ENCODE measurements at regions of chr21 and their contacts with region 1.

Region 1: GRCh38 chr21:22280851-22281250 is 1282.6 kb downstream of the NCAM2 start:
- DNase-seq: no peak
- ATAC-seq: no peak
- H3K4me3 ChIP-seq: no peak overlapping the region
- H3K27ac ChIP-seq: no peak overlapping the region
- H3K4me1 ChIP-seq: no peaks in the 10 kb centered on the region
- H3K27me3 ChIP-seq: no peaks in the 10 kb centered on the region
- CTCF ChIP-seq: no peak
- POLR2A ChIP-seq: no peak

Region 2: GRCh38 chr21:22297575-22297974 is 16.7 kb after region 1 on chr21:
- intact Hi-C with region 1: loop called in 1 of 10 experiments (anchors 2 kb)
- DNase-seq: no peak
- ATAC-seq: no peak
- H3K4me3 ChIP-seq: no peak overlapping the region
- H3K27ac ChIP-seq: no peak overlapping the region
- H3K4me1 ChIP-seq: no peaks in the 10 kb centered on the region
- H3K27me3 ChIP-seq: no peaks in the 10 kb centered on the region
- CTCF ChIP-seq: no peak
- POLR2A ChIP-seq: no peak

Region 3: DNA sequence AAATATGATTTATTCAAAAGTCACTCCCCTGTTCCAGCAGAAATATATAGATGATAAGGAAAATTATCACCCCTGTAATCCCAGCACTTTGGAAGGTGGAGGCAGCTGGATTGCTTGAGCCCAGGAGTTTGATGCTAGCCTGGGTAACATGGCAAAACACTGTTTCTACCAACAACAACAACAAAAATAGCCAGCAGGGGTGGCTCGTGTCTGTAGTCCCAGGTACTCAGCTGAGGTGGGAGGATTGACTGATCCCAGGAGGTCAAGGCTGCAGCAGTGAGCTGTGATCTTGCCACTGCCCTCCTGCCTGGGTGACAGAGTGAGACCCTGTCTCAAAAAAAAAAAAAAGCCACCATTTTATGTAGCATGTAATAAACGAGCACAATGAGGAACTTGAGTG is 263.9 kb after region 1 on chr21:
- intact Hi-C with region 1: no loop called
- DNase-seq: no peak
- ATAC-seq: no peak
- H3K4me3 ChIP-seq: no peak overlapping the region
- H3K27ac ChIP-seq: no peak overlapping the region
- H3K4me1 ChIP-seq: no peaks in the 10 kb centered on the region
- H3K27me3 ChIP-seq: no peaks in the 10 kb centered on the region
- CTCF ChIP-seq: no peak
- POLR2A ChIP-seq: no peak

Measured in heart left ventricle (tissue), 16 donors.